Mammary epithelial cell (primary cell): ENCODE measurements at regions of chr1 and their contacts with region 1.

Region 1: DNA sequence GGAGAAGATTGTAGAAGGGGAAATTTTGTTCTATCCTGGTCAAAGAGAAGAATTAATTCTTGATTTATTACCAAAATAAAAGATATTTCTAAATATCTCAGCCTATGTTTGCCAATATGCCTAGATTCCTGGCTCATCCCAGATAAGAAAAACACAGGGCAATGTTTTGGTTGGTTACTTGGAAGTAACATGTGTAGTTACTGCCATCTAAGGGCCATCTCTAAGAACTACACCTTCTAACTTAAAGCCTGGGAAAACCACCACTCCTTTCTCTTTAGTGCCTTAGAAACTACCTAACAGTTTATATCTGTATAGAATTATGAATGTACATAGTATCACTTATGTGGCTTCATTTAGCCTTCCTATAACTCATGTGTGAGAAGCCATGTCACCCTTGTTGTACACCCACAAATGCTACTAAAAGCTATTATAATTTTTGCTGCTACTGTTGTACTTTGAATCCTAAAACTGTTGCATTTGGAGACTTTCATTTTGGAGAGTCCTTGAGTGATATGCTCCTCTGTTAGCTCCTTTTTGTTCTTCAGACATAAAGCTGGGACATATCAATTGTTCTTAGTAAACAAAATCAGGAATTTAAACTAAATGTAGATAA is 4.5 kb downstream of the AIM2 start:
- DNase-seq: peak; percentile 46
- H3K4me3 ChIP-seq: no peak overlapping the region
- H3K27ac ChIP-seq: no peak overlapping the region
- H3K4me1 ChIP-seq: no peaks in the 10 kb centered on the region
- H3K27me3 ChIP-seq: no peaks in the 10 kb centered on the region
- CTCF ChIP-seq: peak; percentile 67

Region 2: DNA sequence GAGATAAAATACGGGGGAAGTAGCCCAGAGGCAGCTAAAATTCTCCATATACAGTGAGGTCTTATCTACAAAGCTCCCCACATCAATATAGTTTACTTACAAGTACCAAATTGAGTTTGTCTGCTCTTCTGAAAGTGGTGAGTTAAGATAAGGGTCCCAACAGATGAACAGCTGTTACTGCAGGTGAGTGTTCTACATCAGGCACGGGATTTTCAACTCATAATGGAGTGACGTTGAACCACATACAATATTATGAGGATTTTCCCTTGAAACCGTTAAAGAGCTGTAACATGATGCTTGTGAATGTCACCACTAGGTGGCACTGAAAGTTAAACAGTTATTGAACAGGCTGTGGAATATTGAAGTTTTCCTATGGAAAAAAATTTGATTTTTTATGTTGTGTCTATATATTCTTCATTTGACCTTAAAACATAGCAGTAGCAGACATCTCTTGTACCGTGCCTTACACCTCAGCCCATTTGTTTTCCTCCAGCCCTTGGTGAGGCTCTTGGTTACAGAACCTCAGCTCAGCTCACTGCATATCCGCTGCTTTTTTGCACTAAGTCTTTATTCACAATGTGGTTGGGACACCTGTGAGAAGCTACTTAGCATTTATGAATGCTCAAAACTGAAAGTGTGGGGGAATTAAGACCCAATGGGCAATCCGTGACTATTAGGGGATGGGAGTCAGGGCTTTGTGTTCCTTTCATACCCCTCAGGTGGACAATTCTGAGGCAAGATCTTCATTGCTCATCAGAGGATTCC is 868.2 kb before region 1 on chr1:
- CTCF ChIA-PET with region 1: no interaction called
- dilution Hi-C with region 1: no loop called
- in situ Hi-C with region 1: loop called in 1 of 2 experiments (anchors 25 kb)
- intact Hi-C with region 1: loop called (anchors 10 kb)
- DNase-seq: peak; percentile 48
- H3K4me3 ChIP-seq: no peak overlapping the region
- H3K27ac ChIP-seq: no peak overlapping the region
- H3K4me1 ChIP-seq: no peaks in the 10 kb centered on the region
- H3K27me3 ChIP-seq: no peaks in the 10 kb centered on the region
- CTCF ChIP-seq: peak; percentile 65 to 76

Region 3: GRCh38 chr1:158506369-158506987 is 565.6 kb before region 1 on chr1:
- CTCF ChIA-PET with region 1: no interaction called
- dilution Hi-C with region 1: no loop called
- in situ Hi-C with region 1: no loop called
- intact Hi-C with region 1: loop called (anchors 2 kb)
- DNase-seq: peak; percentile 32
- H3K4me3 ChIP-seq: no peak overlapping the region
- H3K27ac ChIP-seq: no peak overlapping the region
- H3K4me1 ChIP-seq: no peaks in the 10 kb centered on the region
- H3K27me3 ChIP-seq: no peaks in the 10 kb centered on the region
- CTCF ChIP-seq: peak; percentile 68 to 79

Region 4: GRCh38 chr1:158793604-158794003 is 278.5 kb before region 1 on chr1:
- CTCF ChIA-PET with region 1: no interaction called
- dilution Hi-C with region 1: no loop called
- in situ Hi-C with region 1: no loop called
- intact Hi-C with region 1: loop called (anchors 2 kb)
- DNase-seq: no peak
- H3K4me3 ChIP-seq: no peak overlapping the region
- H3K27ac ChIP-seq: no peak overlapping the region
- H3K4me1 ChIP-seq: no peaks in the 10 kb centered on the region
- H3K27me3 ChIP-seq: peaks cover 4% of the 10 kb centered on the region
- CTCF ChIP-seq: peak; percentile 27 to 40

Region 5: DNA sequence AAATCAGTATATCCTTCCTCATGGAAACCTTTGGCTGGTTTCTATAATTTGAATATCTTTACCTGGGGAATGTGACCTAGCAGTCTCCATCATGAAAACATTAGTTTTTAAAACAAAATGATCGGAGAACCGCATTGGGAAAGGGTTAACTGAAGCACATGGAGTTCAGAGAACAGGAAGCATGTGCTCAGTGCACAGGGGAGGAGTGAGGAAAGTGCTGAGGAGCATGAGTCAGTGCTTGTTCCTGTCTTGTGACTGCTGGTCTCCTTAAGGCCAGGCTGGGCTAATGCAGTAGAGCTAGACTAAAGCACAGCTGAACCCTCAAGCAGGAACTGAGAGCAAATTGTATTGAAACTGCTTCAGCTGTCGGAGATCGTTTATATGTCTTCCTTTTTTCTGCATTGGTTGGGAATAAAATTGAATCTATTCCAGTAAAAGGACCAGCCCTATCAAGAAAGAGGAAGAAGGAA is 56.6 kb before region 1 on chr1:
- CTCF ChIA-PET with region 1: no interaction called
- dilution Hi-C with region 1: loop called (anchors 5 kb)
- in situ Hi-C with region 1: no loop called
- intact Hi-C with region 1: no loop called
- DNase-seq: peak; percentile 82
- H3K4me3 ChIP-seq: no peak overlapping the region
- H3K27ac ChIP-seq: peak overlapping the region; percentile 19
- H3K4me1 ChIP-seq: peaks cover 13% of the 10 kb centered on the region
- H3K27me3 ChIP-seq: no peaks in the 10 kb centered on the region
- CTCF ChIP-seq: no peak

Region 6: GRCh38 chr1:159352436-159352835 is 280.4 kb after region 1 on chr1:
- CTCF ChIA-PET with region 1: no interaction called
- dilution Hi-C with region 1: no loop called
- in situ Hi-C with region 1: no loop called
- intact Hi-C with region 1: no loop called
- DNase-seq: no peak
- H3K4me3 ChIP-seq: no peak overlapping the region
- H3K27ac ChIP-seq: no peak overlapping the region
- H3K4me1 ChIP-seq: no peaks in the 10 kb centered on the region
- H3K27me3 ChIP-seq: no peaks in the 10 kb centered on the region
- CTCF ChIP-seq: no peak